BJ (cell line): ENCODE measurements at regions of chr20 and their contacts with region 1.

Region 1: GRCh38 chr20:36439040-36439730 is 102.1 kb upstream of the MYL9 start:
- DNase-seq: no peak
- H3K4me3 ChIP-seq: no peak overlapping the region
- H3K27me3 ChIP-seq: peaks cover 10% of the 10 kb centered on the region
- CTCF ChIP-seq: peak; percentile 90

Region 2: GRCh38 chr20:36199345-36200257 is 239.6 kb before region 1 on chr20:
- CTCF ChIA-PET with region 1: interaction called, 41 read pairs
- POLR2A ChIA-PET with region 1: no interaction called
- DNase-seq: peak; percentile 14
- H3K4me3 ChIP-seq: no peak overlapping the region
- H3K27me3 ChIP-seq: no peaks in the 10 kb centered on the region
- CTCF ChIP-seq: peak; percentile 97

Region 3: DNA sequence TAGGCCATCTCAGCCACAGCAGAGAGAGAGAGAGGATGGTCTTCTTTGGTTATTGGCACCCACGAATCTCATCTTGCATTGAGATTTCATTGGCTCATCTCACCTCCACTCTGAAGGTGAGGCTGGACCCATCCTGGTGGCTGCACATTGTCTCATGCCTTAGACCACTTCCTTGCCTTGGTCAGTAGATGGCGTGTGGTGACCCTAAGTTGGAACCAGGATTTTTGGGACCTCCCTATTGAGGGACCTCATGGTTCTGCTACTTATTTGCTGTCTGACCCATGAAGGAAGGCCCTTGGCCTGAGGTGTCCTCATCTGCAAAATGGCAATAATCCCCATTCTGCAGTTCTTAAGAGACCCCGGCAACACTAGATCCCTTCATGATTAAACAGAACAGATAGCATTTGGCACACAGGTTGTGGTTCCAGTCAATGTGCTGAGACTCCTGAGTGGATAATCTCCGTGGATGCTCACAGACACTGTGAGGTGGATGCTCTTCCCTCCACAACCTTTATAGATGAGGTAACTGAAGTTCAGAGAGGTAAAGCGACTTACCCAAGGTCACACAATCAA is 224.4 kb before region 1 on chr20:
- CTCF ChIA-PET with region 1: interaction called, 17 read pairs
- POLR2A ChIA-PET with region 1: no interaction called
- DNase-seq: no peak
- H3K4me3 ChIP-seq: no peak overlapping the region
- H3K27me3 ChIP-seq: no peaks in the 10 kb centered on the region
- CTCF ChIP-seq: peak; percentile 59

Region 4: DNA sequence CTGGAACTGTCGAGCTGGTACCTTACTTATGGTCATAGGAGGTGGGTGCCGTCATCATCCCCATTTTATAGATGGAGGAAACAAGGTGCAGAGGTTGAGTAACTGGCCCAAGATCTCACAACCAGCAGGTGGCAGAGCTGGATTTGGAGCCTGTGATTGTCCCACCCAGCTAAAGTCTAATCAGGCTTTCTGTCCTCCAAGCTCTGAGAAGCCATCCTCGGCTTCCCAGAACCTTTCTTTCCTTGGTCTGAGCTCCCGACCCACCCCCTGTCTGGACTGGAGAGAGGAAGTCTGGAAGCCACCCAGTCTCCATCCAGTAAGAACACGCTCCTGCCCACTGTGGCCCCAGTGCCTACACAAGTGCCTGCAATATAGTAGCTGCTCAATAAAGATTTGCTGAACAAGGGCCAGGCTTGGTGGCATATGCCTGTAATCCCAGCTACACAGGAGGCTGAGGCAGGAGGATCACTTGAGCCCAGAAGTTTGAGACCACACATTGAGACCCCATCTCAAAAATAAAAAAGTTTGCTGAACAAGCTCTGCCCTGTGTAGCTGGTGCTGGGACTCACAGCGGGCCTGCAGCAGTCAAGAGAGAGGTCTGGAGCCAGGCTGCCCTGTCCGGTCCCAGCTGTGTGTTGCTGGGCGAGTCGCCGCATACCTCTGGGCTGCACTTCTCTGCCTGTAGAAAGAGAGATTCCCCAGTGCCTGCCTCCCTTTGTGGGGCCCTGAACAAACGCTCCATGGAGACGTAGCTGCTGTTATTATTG is 165.6 kb before region 1 on chr20:
- CTCF ChIA-PET with region 1: interaction called, 27 read pairs
- POLR2A ChIA-PET with region 1: no interaction called
- DNase-seq: no peak
- H3K4me3 ChIP-seq: no peak overlapping the region
- H3K27me3 ChIP-seq: peaks cover 18% of the 10 kb centered on the region
- CTCF ChIP-seq: peak; percentile 41; the same call in 1 of the 2 replicates

Region 5: DNA sequence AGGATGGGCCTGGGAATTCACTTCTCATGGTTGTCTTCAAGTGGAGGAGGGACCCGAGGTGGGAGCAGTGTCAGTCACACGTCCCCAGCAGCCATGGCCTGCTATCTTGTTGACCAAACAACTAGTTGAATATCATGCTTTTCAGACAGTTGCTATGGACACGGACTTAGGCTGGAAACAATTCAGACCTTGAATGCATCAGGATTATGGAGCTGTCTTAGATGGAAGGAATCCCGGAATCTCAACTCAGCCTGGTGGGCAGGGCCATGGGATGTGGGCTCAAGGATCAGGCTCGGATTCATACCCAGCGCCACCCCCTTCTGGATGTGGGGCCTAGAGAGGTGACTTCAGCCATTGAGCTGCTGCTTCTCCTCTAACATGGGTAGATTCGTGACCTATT is 20.5 kb before region 1 on chr20:
- CTCF ChIA-PET with region 1: interaction called, 15 read pairs
- POLR2A ChIA-PET with region 1: no interaction called
- DNase-seq: no peak
- H3K4me3 ChIP-seq: no peak overlapping the region
- H3K27me3 ChIP-seq: peaks cover 7% of the 10 kb centered on the region; the same call in 1 of the 2 replicates
- CTCF ChIP-seq: no peak

Region 6: GRCh38 chr20:36454698-36455427 is 15.7 kb after region 1 on chr20:
- CTCF ChIA-PET with region 1: interaction called, 27 read pairs
- POLR2A ChIA-PET with region 1: no interaction called
- DNase-seq: no peak
- H3K4me3 ChIP-seq: no peak overlapping the region
- H3K27me3 ChIP-seq: peaks cover 2% of the 10 kb centered on the region; the same call in 1 of the 2 replicates
- CTCF ChIP-seq: no peak